ENCODE measurements at regions of chr3 and their contacts with region 1.

Region 1: DNA sequence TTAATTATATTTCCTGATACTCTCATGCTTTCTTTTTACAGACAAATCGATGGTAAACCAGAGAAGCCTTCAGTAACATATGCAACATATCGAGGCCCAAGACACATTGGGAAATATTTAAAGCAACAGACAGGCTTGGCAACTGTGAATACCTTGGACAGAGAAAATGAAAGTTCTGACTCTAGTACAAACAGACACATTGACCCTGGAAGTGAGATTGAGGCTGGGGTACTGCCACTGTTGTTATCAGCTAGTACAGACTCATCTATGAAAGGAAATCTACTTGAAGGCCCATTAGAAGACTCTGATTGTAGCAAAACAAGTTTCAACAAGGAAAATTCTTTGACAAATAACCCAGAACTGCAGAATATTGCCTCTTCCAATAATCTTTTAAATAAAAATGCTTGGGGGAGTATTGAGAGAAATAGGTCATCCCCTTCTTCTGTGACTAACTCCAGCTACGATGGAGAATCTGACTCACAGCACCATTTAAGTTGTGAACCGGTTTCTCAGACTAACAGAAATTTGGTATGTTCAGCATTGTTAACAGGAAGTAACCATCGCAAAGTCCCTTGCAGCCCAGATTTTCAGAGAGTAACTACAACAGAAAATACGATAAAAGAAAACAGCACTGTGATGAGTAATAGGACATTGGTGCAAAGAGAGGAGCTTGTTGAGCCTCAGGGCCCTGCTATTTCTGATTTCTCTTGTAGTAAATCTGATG is 50.2 kb downstream of the CRYBG3 start:
- DNase-seq: no peak

Region 2: DNA sequence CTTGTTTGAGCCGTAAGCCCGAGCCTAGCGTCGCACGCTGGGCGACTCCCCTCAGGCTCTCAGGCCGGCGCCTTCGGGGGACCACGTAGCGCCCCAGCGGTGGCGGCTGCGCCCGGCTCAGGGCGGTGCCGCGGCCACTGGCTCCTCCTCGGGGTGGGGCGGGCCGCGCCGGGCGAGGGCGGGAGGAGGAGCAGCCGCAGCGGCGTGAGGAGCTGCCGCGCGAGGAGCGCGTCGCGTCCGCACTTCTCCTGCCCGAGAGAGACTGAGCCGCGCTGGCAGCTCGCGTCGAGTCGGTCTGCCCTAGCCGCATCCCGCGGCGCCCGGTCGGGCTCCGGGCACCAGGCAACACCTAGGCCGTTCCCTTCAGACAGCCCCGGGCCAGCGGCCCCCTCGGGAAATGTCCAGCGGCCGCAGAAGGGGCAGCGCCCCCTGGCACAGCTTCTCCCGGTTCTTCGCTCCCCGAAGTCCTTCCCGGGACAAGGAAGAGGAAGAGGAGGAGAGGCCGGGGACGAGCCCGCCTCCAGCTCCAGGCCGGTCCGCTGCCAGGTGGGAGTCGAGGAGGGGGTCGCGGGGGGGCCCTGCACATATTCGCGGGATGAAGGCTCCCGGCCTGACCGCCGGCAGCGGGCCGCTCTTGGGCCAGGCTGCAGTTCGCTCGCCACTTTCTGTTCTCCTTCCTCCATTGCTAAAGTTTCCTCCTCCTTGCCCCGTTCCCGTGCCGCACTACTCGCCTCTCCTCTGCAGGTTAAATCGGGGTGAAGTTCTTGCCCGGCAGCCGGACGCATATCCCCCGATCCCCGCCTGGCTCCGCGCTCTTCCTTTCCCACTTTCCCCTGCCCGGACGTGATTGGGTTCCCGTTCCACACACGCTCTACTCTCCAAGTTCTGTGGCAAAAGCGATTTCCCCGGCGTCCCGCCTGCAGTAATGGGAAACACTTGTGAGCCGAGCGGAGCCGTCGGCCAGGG is 49.9 kb before region 1 on chr3 and contains the start of gene CRYBG3:
- in situ Hi-C with region 1: loop called (anchors 10 kb)
- DNase-seq: peak; percentile 80
- total RNA-seq, gene CRYBG3: 14.2 and 16.2 TPM in 2 replicates

Measured in SK-MEL-5 (cell line).